ENCODE measurements at regions of chr12 and their contacts with region 1.

Region 1: DNA sequence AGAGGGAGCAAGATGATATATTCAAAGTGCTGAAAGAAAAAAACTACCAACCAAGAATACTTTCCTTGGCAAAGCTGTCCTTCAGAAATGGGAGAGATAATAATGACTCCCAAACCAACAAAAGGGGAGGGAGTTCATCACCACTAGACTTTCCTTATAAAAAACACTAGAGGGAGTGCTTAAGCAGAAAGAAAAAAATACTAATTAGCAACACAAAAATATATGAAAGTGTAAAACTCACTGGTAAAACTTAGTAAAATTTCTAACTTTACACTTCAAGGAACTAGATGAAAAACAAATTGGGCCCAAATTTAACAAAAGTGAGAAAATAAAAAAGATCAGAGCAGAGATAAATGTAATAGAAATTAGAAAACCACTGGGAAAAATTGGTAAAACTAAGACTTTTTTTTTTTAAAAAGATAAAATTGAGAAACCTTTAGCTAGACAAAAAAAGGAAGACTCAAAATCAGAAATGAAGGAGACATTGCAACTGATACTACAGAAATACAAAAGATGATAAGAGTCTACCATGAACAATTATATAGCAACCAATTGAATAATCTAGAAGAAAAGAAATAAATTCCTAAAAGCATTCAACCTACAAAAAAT is 60.4 kb upstream of the FAR2 start:
- DNase-seq: peak in 1 of 3 donors; percentile 33
- H3K4me3 ChIP-seq: no peak overlapping the region
- H3K27ac ChIP-seq: no peak overlapping the region
- H3K4me1 ChIP-seq: no peaks in the 10 kb centered on the region
- H3K27me3 ChIP-seq: no peaks in the 10 kb centered on the region

Region 2: GRCh38 chr12:29103539-29103974 is 14.8 kb after region 1 on chr12:
- CTCF ChIA-PET with region 1: interaction called, 11 read pairs
- POLR2A ChIA-PET with region 1: interaction called, 3 read pairs
- DNase-seq: peak; percentile 90 to 97 (median 96)
- H3K4me3 ChIP-seq: peak overlapping the region in 4 of 7 experiments; percentile 25 to 73 (median 55)
- H3K27ac ChIP-seq: peak overlapping the region; percentile 51 to 74
- H3K4me1 ChIP-seq: peaks cover 28 to 54% (median 37%) of the 10 kb centered on the region in 4 experiments
- H3K27me3 ChIP-seq: no peaks in the 10 kb centered on the region

Measured in common myeloid progenitor, CD34-positive (primary cell).